ENCODE measurements at regions of chr7 and their contacts with region 1.

Region 1: GRCh38 chr7:97094284-97094930 is 23.1 kb upstream of the SDHAF3 start:
- DNase-seq: no peak
- ATAC-seq: no peak
- H3K4me3 ChIP-seq: no peak overlapping the region
- H3K27ac ChIP-seq: no peak overlapping the region
- H3K4me1 ChIP-seq: no peaks in the 10 kb centered on the region
- H3K27me3 ChIP-seq: no peaks in the 10 kb centered on the region
- CTCF ChIP-seq: no peak
- EP300 ChIP-seq: no peak
- POLR2A ChIP-seq: no peak
- RAD21 ChIP-seq: no peak

Region 2: GRCh38 chr7:97064967-97065587 is 29.3 kb before region 1 on chr7:
- CTCF ChIA-PET with region 1: interaction called, 14 read pairs
- POLR2A ChIA-PET with region 1: no interaction called
- RAD21 ChIA-PET with region 1: no interaction called
- SMC1A ChIA-PET with region 1: interaction called, 4 read pairs
- in situ Hi-C with region 1: no loop called
- intact Hi-C with region 1: no loop called
- DNase-seq: no peak
- ATAC-seq: peak; percentile 96
- H3K4me3 ChIP-seq: no peak overlapping the region
- H3K27ac ChIP-seq: no peak overlapping the region
- H3K4me1 ChIP-seq: no peaks in the 10 kb centered on the region
- H3K27me3 ChIP-seq: no peaks in the 10 kb centered on the region
- CTCF ChIP-seq: peak; percentile 57 to 70 (median 68)
- EP300 ChIP-seq: no peak
- POLR2A ChIP-seq: no peak
- RAD21 ChIP-seq: peak; percentile 37; the same call in 1 of the 2 replicates